PC-9 (cell line): ENCODE measurements at regions of chr4 and their contacts with region 1.

Region 1: GRCh38 chr4:24856586-24856985 is 56.3 kb downstream of the CCDC149 start:
- DNase-seq: no peak
- H3K4me3 ChIP-seq: no peak overlapping the region
- H3K27ac ChIP-seq: no peak overlapping the region
- H3K4me1 ChIP-seq: peaks cover 7% of the 10 kb centered on the region; the same call in 1 of the 2 replicates
- H3K27me3 ChIP-seq: no peaks in the 10 kb centered on the region
- CTCF ChIP-seq: no peak

Region 2: GRCh38 chr4:24514803-24515202 is 341.8 kb before region 1 on chr4:
- CTCF ChIA-PET with region 1: no interaction called
- POLR2A ChIA-PET with region 1: interaction called, 17 read pairs
- intact Hi-C with region 1: no loop called
- DNase-seq: no peak
- H3K4me3 ChIP-seq: no peak overlapping the region
- H3K27ac ChIP-seq: no peak overlapping the region
- H3K4me1 ChIP-seq: no peaks in the 10 kb centered on the region
- H3K27me3 ChIP-seq: no peaks in the 10 kb centered on the region
- CTCF ChIP-seq: no peak; the same call in 1 of the 2 replicates

Region 3: GRCh38 chr4:24557026-24558025 is 299.3 kb before region 1 on chr4:
- CTCF ChIA-PET with region 1: no interaction called
- POLR2A ChIA-PET with region 1: no interaction called
- intact Hi-C with region 1: no loop called
- DNase-seq: peak in 1 of 2 experiments; percentile 65
- H3K4me3 ChIP-seq: no peak overlapping the region
- H3K27ac ChIP-seq: peak overlapping the region; percentile 83
- H3K4me1 ChIP-seq: peaks cover 43% of the 10 kb centered on the region
- H3K27me3 ChIP-seq: no peaks in the 10 kb centered on the region
- CTCF ChIP-seq: no peak

Region 4: GRCh38 chr4:24624381-24624780 is 232.2 kb before region 1 on chr4:
- CTCF ChIA-PET with region 1: no interaction called
- POLR2A ChIA-PET with region 1: no interaction called
- intact Hi-C with region 1: no loop called
- DNase-seq: no peak
- H3K4me3 ChIP-seq: no peak overlapping the region
- H3K27ac ChIP-seq: no peak overlapping the region
- H3K4me1 ChIP-seq: no peaks in the 10 kb centered on the region
- H3K27me3 ChIP-seq: no peaks in the 10 kb centered on the region
- CTCF ChIP-seq: no peak